ENCODE measurements at regions of chr17 and their contacts with region 1.

Region 1: GRCh38 chr17:78789663-78790181 is 7.6 kb upstream of the CYTH1 start:
- DNase-seq: peak; percentile 42 to 85 (median 74)
- ATAC-seq: peak; percentile 82
- H3K4me3 ChIP-seq: peak overlapping the region; percentile 19
- H3K4me3 Mint-ChIP-seq: peak overlapping the region; percentile 75
- H3K27ac ChIP-seq: peak overlapping the region; percentile 51 to 73
- H3K27ac Mint-ChIP-seq: peak overlapping the region; percentile 97
- H3K4me1 ChIP-seq: peaks cover 87% of the 10 kb centered on the region
- H3K4me1 Mint-ChIP-seq: peaks cover 80% of the 10 kb centered on the region
- H3K27me3 ChIP-seq: no peaks in the 10 kb centered on the region
- H3K27me3 Mint-ChIP-seq: no peaks in the 10 kb centered on the region
- CTCF ChIP-seq: no peak

Region 2: GRCh38 chr17:78723957-78724943 is 65.5 kb before region 1 on chr17:
- CTCF ChIA-PET with region 1: no interaction called
- POLR2A ChIA-PET with region 1: interaction called, 10 read pairs
- intact Hi-C with region 1: no loop called
- DNase-seq: peak in 1 of 14 experiments; percentile 32
- ATAC-seq: no peak
- H3K4me3 ChIP-seq: no peak overlapping the region
- H3K4me3 Mint-ChIP-seq: peak overlapping the region; percentile 77
- H3K27ac ChIP-seq: peak overlapping the region; percentile 4 to 48
- H3K27ac Mint-ChIP-seq: peak overlapping the region; percentile 79
- H3K4me1 ChIP-seq: peaks cover 96% of the 10 kb centered on the region
- H3K4me1 Mint-ChIP-seq: peaks cover 95% of the 10 kb centered on the region
- H3K27me3 ChIP-seq: no peaks in the 10 kb centered on the region
- H3K27me3 Mint-ChIP-seq: no peaks in the 10 kb centered on the region
- CTCF ChIP-seq: no peak

Region 3: DNA sequence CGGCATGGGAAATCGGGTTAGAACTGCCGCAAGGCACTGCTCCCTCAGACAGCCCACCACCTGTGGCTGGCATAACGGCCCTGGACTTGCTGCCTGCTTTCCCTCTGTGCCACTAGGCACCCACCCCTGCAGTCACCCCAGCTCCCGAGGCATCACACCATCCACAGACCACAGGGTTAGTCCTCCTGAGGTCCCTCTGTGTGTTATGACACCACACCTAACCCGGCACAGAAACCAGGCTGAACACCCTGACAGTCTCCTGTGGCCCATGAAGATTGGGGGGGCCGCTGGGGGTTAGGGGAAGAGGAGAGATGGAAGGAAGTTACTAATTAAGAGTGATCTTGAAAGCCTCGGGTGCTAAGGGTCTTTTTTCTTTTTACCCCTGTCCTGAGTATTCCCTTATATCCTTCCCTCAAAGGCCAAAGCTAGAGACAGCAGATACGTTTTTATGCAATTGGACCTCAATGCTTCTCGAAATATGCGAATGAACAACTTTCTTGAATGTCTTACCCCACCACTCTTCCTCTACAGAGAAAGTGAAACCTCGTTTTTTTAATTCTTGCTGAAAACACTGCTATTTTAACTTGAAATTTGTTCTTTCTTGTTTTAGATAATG is 14.7 kb before region 1 on chr17:
- CTCF ChIA-PET with region 1: interaction called, 7 read pairs
- POLR2A ChIA-PET with region 1: interaction called, 41 read pairs
- intact Hi-C with region 1: no loop called
- DNase-seq: peak; percentile 39 to 84 (median 54)
- ATAC-seq: peak; percentile 37
- H3K4me3 ChIP-seq: peak overlapping the region; percentile 66
- H3K4me3 Mint-ChIP-seq: peak overlapping the region; percentile 90
- H3K27ac ChIP-seq: peak overlapping the region; percentile 85 to 86
- H3K27ac Mint-ChIP-seq: peak overlapping the region; percentile 95
- H3K4me1 ChIP-seq: peaks cover 89% of the 10 kb centered on the region
- H3K4me1 Mint-ChIP-seq: peaks cover 67% of the 10 kb centered on the region
- H3K27me3 ChIP-seq: no peaks in the 10 kb centered on the region
- H3K27me3 Mint-ChIP-seq: no peaks in the 10 kb centered on the region
- CTCF ChIP-seq: no peak

Region 4: DNA sequence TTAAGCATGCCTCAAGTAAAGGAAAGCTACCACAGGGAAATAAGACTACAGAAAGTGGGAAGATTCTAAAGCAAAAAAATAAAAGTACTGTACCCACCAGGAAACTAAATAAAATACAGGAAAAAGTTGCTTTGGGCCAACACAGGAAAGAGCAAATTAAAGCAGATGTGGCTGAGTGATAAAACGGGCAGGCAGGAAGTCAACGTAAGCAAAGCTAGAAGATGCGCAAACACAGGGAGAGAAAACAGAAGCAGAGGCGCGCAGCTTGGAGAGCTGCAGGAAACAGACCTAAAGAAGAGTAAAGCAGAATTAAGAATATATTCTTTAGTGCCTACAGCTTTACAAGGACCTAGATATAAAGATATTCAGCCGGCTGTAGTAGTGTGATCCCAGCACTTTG is 29.2 kb after region 1 on chr17:
- CTCF ChIA-PET with region 1: interaction called, 7 read pairs
- POLR2A ChIA-PET with region 1: interaction called, 31 read pairs
- intact Hi-C with region 1: loop called in 1 of 2 experiments (anchors 5 kb)
- DNase-seq: peak in 13 of 14 experiments; percentile 40 to 88 (median 62)
- ATAC-seq: peak; percentile 59
- H3K4me3 ChIP-seq: peak overlapping the region; percentile 3
- H3K4me3 Mint-ChIP-seq: peak overlapping the region; percentile 71
- H3K27ac ChIP-seq: peak overlapping the region; percentile 76 to 79
- H3K27ac Mint-ChIP-seq: peak overlapping the region; percentile 91
- H3K4me1 ChIP-seq: peaks cover 59% of the 10 kb centered on the region
- H3K4me1 Mint-ChIP-seq: peaks cover 66% of the 10 kb centered on the region
- H3K27me3 ChIP-seq: no peaks in the 10 kb centered on the region
- H3K27me3 Mint-ChIP-seq: no peaks in the 10 kb centered on the region
- CTCF ChIP-seq: no peak